ENCODE measurements at regions of chr6 and their contacts with region 1.

Region 1: DNA sequence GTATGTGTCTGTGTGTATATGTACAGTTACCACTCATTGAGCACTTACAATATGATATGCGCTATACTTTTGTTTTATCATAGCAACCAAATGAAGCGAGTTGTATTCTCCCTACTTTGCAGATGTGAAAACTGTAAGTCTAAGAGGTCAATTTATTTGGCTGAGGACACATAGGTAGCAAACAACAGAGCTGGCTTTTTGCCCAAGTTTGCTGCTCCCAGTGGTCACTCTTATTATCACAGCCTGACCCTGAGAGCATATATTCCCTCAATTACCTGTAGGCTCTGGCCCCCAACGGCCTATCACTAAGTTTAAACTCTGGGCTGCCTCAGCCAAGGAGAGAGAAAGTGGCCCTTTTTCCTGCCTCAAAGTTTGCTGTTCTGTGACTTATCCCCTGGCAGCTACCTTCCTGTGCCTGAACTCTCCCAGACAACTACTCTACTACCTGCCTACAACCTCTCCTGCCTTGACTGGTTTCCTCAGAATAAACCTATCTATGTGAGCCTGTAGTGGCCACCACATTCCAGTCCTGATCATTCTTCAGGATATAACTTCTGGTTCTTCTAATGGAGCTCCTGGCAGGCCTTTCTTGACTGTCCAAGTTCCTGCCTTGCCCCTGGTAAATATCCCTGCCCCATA is 221.8 kb downstream of the FRK start:
- DNase-seq: peak; percentile 61
- H3K4me3 Mint-ChIP-seq: no peak overlapping the region
- H3K27ac Mint-ChIP-seq: no peak overlapping the region
- H3K4me1 Mint-ChIP-seq: no peaks in the 10 kb centered on the region
- H3K27me3 Mint-ChIP-seq: no peaks in the 10 kb centered on the region
- CTCF ChIP-seq: peak; percentile 62

Region 2: DNA sequence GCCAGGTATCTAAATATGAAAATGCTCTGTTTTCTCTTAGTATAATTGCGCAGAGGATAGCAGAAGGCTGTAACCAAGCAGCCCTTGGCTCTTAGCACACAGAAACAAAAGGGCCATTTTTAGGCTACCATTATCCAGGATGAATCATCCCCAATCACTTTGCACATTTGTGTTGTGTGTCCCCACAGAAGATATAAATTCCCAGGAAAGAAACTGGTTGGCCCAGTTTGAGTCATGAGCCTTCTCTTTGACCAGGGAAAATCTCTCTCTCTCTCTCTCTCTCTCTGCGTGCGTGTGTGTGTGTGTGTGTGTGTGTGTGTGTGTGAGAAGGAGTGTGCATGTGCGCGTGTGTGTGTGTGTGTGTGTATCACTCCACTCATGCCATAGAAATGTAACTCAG is 43.3 kb after region 1 on chr6:
- CTCF ChIA-PET with region 1: no interaction called
- intact Hi-C with region 1: loop called (anchors 5 kb)
- DNase-seq: peak; percentile 73
- H3K4me3 Mint-ChIP-seq: peak overlapping the region; percentile 66
- H3K27ac Mint-ChIP-seq: peak overlapping the region; percentile 98
- H3K4me1 Mint-ChIP-seq: peaks cover 19% of the 10 kb centered on the region
- H3K27me3 Mint-ChIP-seq: no peaks in the 10 kb centered on the region
- CTCF ChIP-seq: no peak

Measured in Calu3 (cell line).